ENCODE measurements at regions of chr16 and their contacts with region 1.

Region 1: DNA sequence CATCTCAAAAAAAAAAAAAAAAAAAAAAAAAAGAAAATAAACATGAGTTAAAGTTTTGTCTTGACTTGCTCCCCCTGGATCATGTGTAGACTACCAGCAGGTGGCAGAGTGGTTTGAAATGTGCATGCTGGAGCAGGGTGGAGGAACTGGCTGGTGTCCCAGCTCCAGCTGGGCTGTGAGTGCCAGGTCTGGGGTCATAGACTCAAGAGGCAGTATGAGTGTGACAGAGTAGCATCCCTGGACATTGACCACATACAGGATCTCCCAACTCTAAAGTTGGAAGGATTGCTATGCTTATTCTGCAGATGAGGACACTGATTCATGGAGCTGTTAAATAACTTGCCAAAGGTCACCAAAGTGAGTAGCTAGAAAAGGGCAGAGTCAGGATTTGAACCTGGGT is 198.0 kb upstream of the MPHOSPH6 start:
- DNase-seq: peak; percentile 38
- ATAC-seq: peak; percentile 94
- H3K4me3 ChIP-seq: no peak overlapping the region
- H3K27ac ChIP-seq: no peak overlapping the region
- H3K4me1 ChIP-seq: no peaks in the 10 kb centered on the region
- H3K27me3 ChIP-seq: peaks cover 5% of the 10 kb centered on the region; the same call in 1 of the 2 replicates
- CTCF ChIP-seq: peak; percentile 51 to 58 (median 56); a peak in 5 of 6 replicates
- POLR2A ChIP-seq: no peak
- RAD21 ChIP-seq: peak; percentile 54

Region 2: GRCh38 chr16:82580298-82580890 is 212.4 kb after region 1 on chr16:
- CTCF ChIA-PET with region 1: no interaction called
- POLR2A ChIA-PET with region 1: no interaction called
- RAD21 ChIA-PET with region 1: no interaction called
- intact Hi-C with region 1: loop called (anchors 1 kb)
- DNase-seq: peak; percentile 4
- ATAC-seq: peak; percentile 81
- H3K4me3 ChIP-seq: no peak overlapping the region
- H3K27ac ChIP-seq: no peak overlapping the region
- H3K4me1 ChIP-seq: no peaks in the 10 kb centered on the region
- H3K27me3 ChIP-seq: peaks cover 22% of the 10 kb centered on the region; the same call in 1 of the 2 replicates
- CTCF ChIP-seq: peak; percentile 33 to 47 (median 42); a peak in 4 of 6 replicates
- POLR2A ChIP-seq: no peak
- RAD21 ChIP-seq: peak; percentile 61

Region 3: GRCh38 chr16:83215406-83216001 is 847.5 kb after region 1 on chr16:
- CTCF ChIA-PET with region 1: no interaction called
- POLR2A ChIA-PET with region 1: no interaction called
- RAD21 ChIA-PET with region 1: no interaction called
- intact Hi-C with region 1: loop called (anchors 2 kb)
- DNase-seq: peak; percentile 21
- ATAC-seq: peak; percentile 77
- H3K4me3 ChIP-seq: no peak overlapping the region
- H3K27ac ChIP-seq: no peak overlapping the region
- H3K4me1 ChIP-seq: no peaks in the 10 kb centered on the region
- H3K27me3 ChIP-seq: no peaks in the 10 kb centered on the region
- CTCF ChIP-seq: peak; percentile 28 to 92 (median 84); a peak in 5 of 6 replicates
- POLR2A ChIP-seq: no peak
- RAD21 ChIP-seq: peak; percentile 65